Heart right ventricle (tissue), 16 donors: ENCODE measurements at regions of chr14 and their contacts with region 1.

Region 1: DNA sequence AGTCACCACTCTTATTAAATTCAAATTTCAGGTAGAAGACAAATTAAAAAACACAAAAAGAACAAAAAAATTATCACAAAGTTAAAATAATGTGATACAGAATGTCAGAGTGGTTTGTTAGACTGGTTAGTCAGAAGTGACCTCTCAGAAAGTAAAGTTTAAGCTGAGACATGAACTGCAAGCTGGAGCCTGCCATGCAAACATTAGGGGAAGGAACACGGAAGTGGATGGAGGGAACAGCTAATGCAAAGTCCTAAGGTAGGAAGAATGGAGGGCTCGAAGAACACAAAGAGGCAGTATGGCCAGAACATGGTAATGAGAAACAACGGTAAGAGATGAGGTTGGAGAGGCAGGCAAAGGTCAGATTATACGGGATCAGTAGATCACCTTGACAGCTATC is 41.7 kb downstream of the WDHD1 start:
- DNase-seq: no peak
- ATAC-seq: no peak
- H3K4me3 ChIP-seq: no peak overlapping the region
- H3K27ac ChIP-seq: no peak overlapping the region
- H3K4me1 ChIP-seq: no peaks in the 10 kb centered on the region
- H3K27me3 ChIP-seq: no peaks in the 10 kb centered on the region
- CTCF ChIP-seq: no peak

Region 2: DNA sequence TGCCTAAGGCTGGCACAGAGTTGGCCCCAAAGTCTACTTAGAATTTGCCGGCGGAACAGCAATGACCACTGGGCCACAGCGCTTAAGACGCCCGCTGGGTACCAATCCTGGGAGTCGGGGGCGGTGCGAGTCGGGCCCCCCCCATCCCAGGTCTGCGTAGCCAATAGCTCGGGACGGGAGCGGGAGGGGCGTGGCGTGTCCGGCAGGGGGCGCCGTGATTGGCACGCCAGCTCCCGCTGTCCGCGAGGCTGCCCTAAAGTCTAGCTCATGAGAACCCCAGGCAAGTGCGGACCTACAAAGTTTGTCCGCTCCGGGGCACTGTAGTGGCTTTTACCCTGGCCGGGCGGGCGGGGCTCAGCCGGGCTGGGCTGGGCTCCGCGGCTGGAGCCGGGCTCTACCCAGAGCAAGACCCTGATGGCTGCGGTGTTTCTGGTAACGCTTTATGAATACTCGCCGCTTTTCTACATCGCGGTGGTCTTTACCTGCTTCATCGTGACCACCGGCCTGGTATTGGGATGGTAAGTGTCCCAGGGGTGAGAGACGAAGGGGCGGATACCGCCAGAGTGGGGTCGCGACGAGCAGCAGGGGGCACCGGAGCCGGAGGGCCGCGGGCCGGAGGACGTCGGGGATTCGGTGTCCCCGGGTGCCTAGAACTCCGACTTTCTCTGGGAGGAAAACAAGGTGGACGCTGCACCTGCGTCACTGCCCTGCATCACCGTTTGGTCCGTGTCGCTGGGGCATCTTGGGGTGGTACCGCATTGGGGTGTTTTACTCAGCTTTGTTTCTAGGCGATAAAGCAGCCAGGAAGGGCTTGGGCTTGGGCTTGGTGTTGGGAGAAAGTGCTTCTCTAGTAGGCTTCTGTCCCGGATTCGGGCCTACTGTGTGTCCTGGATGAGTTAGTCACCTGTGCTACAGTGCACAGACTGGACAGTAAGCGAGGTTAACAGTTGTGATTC is 475.3 kb before region 1 on chr14 and contains the start of gene CGRRF1:
- intact Hi-C with region 1: loop called in 1 of 10 experiments (anchors 5 kb)
- DNase-seq: peak; percentile 99
- ATAC-seq: peak; percentile 99 to 100 (median 99)
- H3K4me3 ChIP-seq: peak within 1 kb of the TSS; percentile 80 to 97 (median 91)
- H3K27ac ChIP-seq: peak within 1 kb of the TSS in 9 of 10 donors; percentile 72 to 92 (median 86)
- H3K4me1 ChIP-seq: peaks cover 0 to 34% (median 31%) of the 10 kb centered on the region in 9 donors
- H3K27me3 ChIP-seq: no peaks in the 10 kb centered on the region
- CTCF ChIP-seq: peak; percentile 47 to 98 (median 83)
- total RNA-seq, gene CGRRF1: 14.2 to 20.3 (median 16.7) TPM

Region 3: DNA sequence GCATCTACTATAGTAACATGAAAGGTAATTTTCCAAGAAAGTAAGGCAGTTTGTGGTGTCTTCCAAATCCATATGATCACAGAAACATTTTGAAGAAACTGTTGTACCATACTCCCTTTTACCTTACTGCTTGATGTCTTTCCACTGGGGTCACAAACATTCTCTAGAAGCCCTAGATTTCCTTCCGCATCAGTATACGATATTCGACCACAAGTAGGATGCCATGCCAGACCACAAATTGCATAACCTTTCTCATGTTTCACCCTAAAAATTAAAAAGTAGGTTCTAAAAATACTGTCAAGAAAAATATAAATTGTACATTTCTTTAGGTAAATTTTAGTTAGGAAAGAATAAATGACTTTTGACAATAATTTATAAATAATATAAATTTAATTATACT is 15.2 kb after region 1 on chr14:
- intact Hi-C with region 1: no loop called
- DNase-seq: no peak
- ATAC-seq: no peak
- H3K4me3 ChIP-seq: no peak overlapping the region
- H3K27ac ChIP-seq: no peak overlapping the region
- H3K4me1 ChIP-seq: no peaks in the 10 kb centered on the region
- H3K27me3 ChIP-seq: no peaks in the 10 kb centered on the region
- CTCF ChIP-seq: no peak

Region 4: DNA sequence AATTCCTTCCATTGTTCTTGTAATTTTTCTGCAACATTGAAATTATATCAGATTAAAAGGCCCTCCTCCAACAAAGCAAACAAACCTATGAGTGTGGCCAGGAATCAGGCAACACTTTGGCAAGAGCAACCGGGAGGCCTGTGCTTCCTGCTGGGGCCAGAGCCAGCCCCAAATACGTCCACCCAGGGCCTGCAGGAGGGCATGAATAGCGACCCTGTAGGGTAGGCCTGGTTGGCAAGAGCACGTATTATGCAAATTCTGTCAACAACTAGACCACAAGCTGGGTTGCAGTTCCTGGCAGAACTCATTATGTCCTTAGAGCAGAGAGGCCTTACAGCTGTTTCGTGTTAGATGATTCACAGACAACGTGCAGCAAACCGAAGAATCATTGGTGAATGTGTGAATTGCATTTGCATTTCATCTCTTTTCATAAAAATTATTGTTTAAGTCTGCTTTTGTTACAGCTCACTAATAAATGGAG is 117.0 kb after region 1 on chr14:
- intact Hi-C with region 1: no loop called
- DNase-seq: peak; percentile 75 to 77
- ATAC-seq: peak; percentile 75 to 93 (median 87)
- H3K4me3 ChIP-seq: no peak overlapping the region
- H3K27ac ChIP-seq: peak overlapping the region; percentile 76 to 96 (median 87)
- H3K4me1 ChIP-seq: peaks cover 10 to 98% (median 85%) of the 10 kb centered on the region in 9 donors
- H3K27me3 ChIP-seq: no peaks in the 10 kb centered on the region
- CTCF ChIP-seq: no peak

Region 5: DNA sequence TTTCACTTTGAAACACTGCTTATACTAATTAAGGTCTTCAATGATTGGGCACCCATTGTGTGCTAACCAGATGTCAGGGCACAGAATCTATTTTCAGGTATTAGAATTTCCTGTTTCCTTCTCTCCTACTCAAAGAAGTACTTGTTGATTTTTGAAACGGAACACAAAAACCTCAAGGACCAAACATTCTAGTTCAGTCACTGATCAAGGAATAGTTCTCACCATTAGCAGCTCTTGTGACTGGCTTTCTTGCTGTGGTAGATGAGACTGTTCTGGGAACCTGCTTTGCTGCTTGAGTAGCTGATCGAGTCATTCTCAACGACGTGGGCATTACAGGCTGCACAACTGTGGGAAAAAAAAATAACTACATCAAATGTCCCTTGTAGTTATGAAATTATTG is 195.3 kb after region 1 on chr14:
- intact Hi-C with region 1: no loop called
- DNase-seq: no peak
- ATAC-seq: no peak
- H3K4me3 ChIP-seq: no peak overlapping the region
- H3K27ac ChIP-seq: no peak overlapping the region
- H3K4me1 ChIP-seq: no peaks in the 10 kb centered on the region
- H3K27me3 ChIP-seq: no peaks in the 10 kb centered on the region
- CTCF ChIP-seq: no peak